Dorsolateral prefrontal cortex (tissue), 120 donors: ENCODE measurements at regions of chr1 and their contacts with region 1.

Region 1: GRCh38 chr1:25624156-25624555 is 7.6 kb downstream of the MAN1C1 start:
- DNase-seq: no peak
- H3K4me3 ChIP-seq: no peak overlapping the region
- H3K27ac ChIP-seq: peak overlapping the region in 5 of 59 donors; percentile 10 to 41 (median 23)
- H3K27me3 ChIP-seq: no peaks in the 10 kb centered on the region
- CTCF ChIP-seq: no peak

Region 2: GRCh38 chr1:25695090-25695770 is 71.1 kb after region 1 on chr1:
- intact Hi-C with region 1: loop called (anchors 5 kb)
- DNase-seq: peak in 1 of 10 donors; percentile 53
- H3K4me3 ChIP-seq: peak overlapping the region in 4 of 59 donors; percentile 1 to 22 (median 14)
- H3K27ac ChIP-seq: peak overlapping the region in 58 of 59 donors; percentile 3 to 92 (median 78)
- H3K27me3 ChIP-seq: no peaks in the 10 kb centered on the region
- CTCF ChIP-seq: peak in 23 of 56 donors; percentile 2 to 35 (median 16)

Region 3: DNA sequence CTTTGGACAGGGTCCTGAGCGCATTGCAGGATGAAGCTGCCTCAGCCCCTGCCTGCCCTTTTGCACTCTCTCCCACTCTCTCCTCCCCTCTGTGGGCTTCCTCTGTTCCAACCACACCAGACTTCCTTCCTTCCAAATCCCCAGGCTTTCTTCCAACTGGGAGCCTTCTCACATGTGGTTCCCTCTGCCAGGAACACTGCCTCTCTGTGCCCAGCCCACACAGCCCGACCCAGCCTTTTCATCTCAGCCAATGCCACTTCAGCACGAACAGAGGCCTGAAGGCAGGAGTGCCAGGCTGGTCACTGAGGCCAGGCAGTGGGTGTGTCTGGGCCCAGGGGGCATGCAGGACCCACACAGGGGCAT is 181.7 kb after region 1 on chr1:
- intact Hi-C with region 1: no loop called
- DNase-seq: peak in 9 of 10 donors; percentile 63 to 87 (median 76)
- H3K4me3 ChIP-seq: peak overlapping the region in 3 of 59 donors; percentile 11 to 19 (median 12)
- H3K27ac ChIP-seq: peak overlapping the region in 57 of 59 donors; percentile 39 to 93 (median 83)
- H3K27me3 ChIP-seq: no peaks in the 10 kb centered on the region
- CTCF ChIP-seq: no peak